Calu3 (cell line): ENCODE measurements at regions of chr12 and their contacts with region 1.

Region 1: GRCh38 chr12:75656650-75657049 is 145.2 kb upstream of the KRR1 start:
- DNase-seq: peak; percentile 85
- H3K4me3 Mint-ChIP-seq: no peak overlapping the region
- H3K27ac Mint-ChIP-seq: no peak overlapping the region
- H3K4me1 Mint-ChIP-seq: peaks cover 43% of the 10 kb centered on the region
- H3K27me3 Mint-ChIP-seq: no peaks in the 10 kb centered on the region
- CTCF ChIP-seq: no peak

Region 2: GRCh38 chr12:75690296-75690955 is 33.8 kb after region 1 on chr12:
- CTCF ChIA-PET with region 1: no interaction called
- intact Hi-C with region 1: no loop called
- DNase-seq: no peak
- H3K4me3 Mint-ChIP-seq: no peak overlapping the region
- H3K27ac Mint-ChIP-seq: no peak overlapping the region
- H3K4me1 Mint-ChIP-seq: peaks cover 7% of the 10 kb centered on the region
- H3K27me3 Mint-ChIP-seq: no peaks in the 10 kb centered on the region
- CTCF ChIP-seq: no peak

Region 3: GRCh38 chr12:75712252-75712651 is 55.6 kb after region 1 on chr12:
- CTCF ChIA-PET with region 1: no interaction called
- intact Hi-C with region 1: loop called (anchors 2 kb)
- DNase-seq: peak; percentile 51
- H3K4me3 Mint-ChIP-seq: no peak overlapping the region
- H3K27ac Mint-ChIP-seq: peak overlapping the region; percentile 91
- H3K4me1 Mint-ChIP-seq: peaks cover 73% of the 10 kb centered on the region
- H3K27me3 Mint-ChIP-seq: no peaks in the 10 kb centered on the region
- CTCF ChIP-seq: no peak